Astrocyte of the cerebellum (primary cell): ENCODE measurements at regions of chr14 and their contacts with region 1.

Region 1: DNA sequence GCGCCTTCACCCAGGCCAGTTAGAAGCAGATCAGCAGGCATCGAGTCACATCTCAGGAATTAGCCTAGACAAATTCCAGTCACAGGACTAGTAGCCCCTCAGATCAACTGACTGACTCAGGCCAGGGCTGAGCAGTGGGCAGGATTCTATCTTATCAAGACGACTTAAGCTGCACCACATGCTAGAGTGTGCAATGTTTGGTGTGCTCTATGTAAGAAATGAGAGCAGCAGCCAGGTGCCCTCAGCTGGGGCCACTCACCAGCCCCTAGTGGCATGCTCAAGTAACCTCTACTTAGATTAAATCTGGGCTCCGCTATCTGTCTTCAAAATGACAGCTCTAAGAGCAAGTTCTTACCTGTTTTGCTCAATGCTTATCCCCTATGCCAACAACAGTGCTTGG is 19.7 kb upstream of the NGB start:
- DNase-seq: no peak
- H3K4me3 ChIP-seq: no peak overlapping the region
- CTCF ChIP-seq: no peak

Region 2: GRCh38 chr14:77372304-77372841 is 81.6 kb after region 1 on chr14:
- in situ Hi-C with region 1: loop called (anchors 5 kb)
- DNase-seq: peak; percentile 38
- H3K4me3 ChIP-seq: no peak overlapping the region
- CTCF ChIP-seq: no peak